Activated B cell treated with CpG ODN at 0.5 μM for 24 hours (primary cell): ENCODE measurements at regions of chr1 and their contacts with region 1.

Region 1: DNA sequence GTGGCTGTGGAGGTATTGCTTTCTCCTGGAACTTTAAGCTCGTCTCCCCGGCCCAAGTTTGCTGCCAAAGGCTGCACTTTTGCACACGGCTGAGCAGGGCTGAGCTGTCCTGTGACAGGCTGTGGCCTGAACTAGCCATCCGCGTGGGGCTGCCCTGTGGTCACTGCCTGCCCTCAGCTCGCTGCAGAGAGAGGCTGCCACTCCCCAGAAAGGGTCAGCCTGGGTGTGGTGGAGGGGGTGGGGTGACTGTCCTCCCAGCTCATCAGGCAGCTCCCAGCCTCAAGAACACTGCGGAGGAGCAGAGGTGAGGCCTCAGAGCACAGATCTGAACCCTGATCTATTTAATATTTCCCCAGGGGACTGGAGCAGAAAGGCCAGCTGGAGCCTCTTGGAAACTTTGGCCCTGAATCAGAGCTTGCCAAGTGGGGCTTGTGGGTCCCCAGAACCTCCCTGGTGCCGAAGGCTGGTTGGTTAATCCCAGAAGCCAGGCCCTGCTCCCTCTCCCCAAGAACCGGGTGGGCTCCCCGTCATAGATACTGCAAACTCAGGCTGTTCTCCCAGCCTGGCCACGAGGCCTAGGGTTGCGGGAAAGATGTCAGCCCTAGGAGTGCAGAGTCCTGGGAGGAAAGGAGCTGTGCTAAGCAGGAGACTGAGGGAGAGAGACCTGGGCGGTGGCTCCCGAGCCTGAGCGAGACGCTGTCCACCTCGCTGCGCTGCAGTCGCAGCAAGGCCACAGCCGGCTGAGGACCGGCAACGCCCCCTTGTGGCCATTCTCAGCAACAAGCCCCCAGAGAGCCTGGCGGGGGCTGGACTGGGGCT is 125.1 kb upstream of the IPO9 start:
- DNase-seq: peak; percentile 38
- ATAC-seq: peak; percentile 61
- H3K4me3 Mint-ChIP-seq: no peak overlapping the region
- H3K27ac Mint-ChIP-seq: no peak overlapping the region
- H3K4me1 Mint-ChIP-seq: no peaks in the 10 kb centered on the region
- H3K27me3 Mint-ChIP-seq: peaks cover 7% of the 10 kb centered on the region
- CTCF ChIP-seq: no peak

Region 2: GRCh38 chr1:201530741-201531531 is 172.9 kb before region 1 on chr1:
- CTCF ChIA-PET with region 1: interaction called, 4 read pairs
- POLR2A ChIA-PET with region 1: no interaction called
- intact Hi-C with region 1: loop called (anchors 1 kb)
- DNase-seq: no peak
- ATAC-seq: peak; percentile 45
- H3K4me3 Mint-ChIP-seq: no peak overlapping the region
- H3K27ac Mint-ChIP-seq: no peak overlapping the region
- H3K4me1 Mint-ChIP-seq: no peaks in the 10 kb centered on the region
- H3K27me3 Mint-ChIP-seq: peaks cover 7% of the 10 kb centered on the region
- CTCF ChIP-seq: no peak

Region 3: DNA sequence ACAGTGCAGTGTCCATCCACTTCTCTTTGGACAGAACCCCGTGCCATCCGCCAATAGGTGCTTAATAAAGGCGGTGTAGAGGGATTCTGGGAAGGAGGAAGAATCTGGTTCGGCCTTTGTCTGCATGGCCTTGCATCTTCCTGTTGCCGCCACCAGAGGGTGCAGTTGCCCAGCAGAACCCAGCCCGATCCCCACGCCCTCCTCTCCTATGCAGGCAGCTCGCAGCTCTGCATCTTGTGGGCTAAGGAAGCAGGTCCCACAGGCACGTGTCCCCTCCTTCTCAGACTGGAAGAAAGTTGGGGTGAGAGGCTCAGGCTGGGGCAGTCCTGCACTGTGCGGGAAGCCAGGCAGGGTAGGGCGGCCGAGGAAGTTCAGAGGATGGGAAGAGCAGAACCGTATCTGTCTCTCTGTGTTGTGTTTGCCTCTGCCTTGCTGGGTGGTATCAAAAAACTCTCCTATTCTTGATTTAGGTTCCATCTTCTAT is 144.1 kb before region 1 on chr1:
- CTCF ChIA-PET with region 1: interaction called, 16 read pairs
- POLR2A ChIA-PET with region 1: no interaction called
- intact Hi-C with region 1: loop called (anchors 1 kb)
- DNase-seq: peak; percentile 57
- ATAC-seq: peak; percentile 88
- H3K4me3 Mint-ChIP-seq: no peak overlapping the region
- H3K27ac Mint-ChIP-seq: no peak overlapping the region
- H3K4me1 Mint-ChIP-seq: peaks cover 4% of the 10 kb centered on the region
- H3K27me3 Mint-ChIP-seq: no peaks in the 10 kb centered on the region
- CTCF ChIP-seq: peak; percentile 34